HEK293 (cell line): ENCODE measurements at regions of chr12 and their contacts with region 1.

Region 1: GRCh38 chr12:106955377-106956047 is at the start of gene TMEM263:
- H3K4me3 ChIP-seq: peak within 1 kb of the TSS; percentile 59
- H3K27ac ChIP-seq: peak within 1 kb of the TSS; percentile 96
- H3K4me1 ChIP-seq: peaks cover 15% of the 10 kb centered on the region
- CTCF ChIP-seq: no peak

Region 2: GRCh38 chr12:106357549-106358395 is 597.7 kb before region 1 on chr12 and contains the start of gene POLR3B:
- CTCF ChIA-PET with region 1: no interaction called
- POLR2A ChIA-PET with region 1: interaction called, 10 read pairs
- H3K4me3 ChIP-seq: peak within 1 kb of the TSS; percentile 98
- H3K27ac ChIP-seq: peak within 1 kb of the TSS; percentile 74
- H3K4me1 ChIP-seq: no peaks in the 10 kb centered on the region
- CTCF ChIP-seq: peak; percentile 96

Region 3: GRCh38 chr12:106978035-106978800 is 22.7 kb after region 1 on chr12:
- CTCF ChIA-PET with region 1: no interaction called
- POLR2A ChIA-PET with region 1: interaction called, 23 read pairs
- H3K4me3 ChIP-seq: no peak overlapping the region
- H3K27ac ChIP-seq: no peak overlapping the region
- H3K4me1 ChIP-seq: peaks cover 7% of the 10 kb centered on the region; the same call in 1 of the 2 replicates
- CTCF ChIP-seq: no peak

Region 4: GRCh38 chr12:106986625-106987430 is 31.3 kb after region 1 on chr12 and contains the start of gene MTERF2:
- CTCF ChIA-PET with region 1: no interaction called
- POLR2A ChIA-PET with region 1: interaction called, 34 read pairs
- H3K4me3 ChIP-seq: peak within 1 kb of the TSS; percentile 89
- H3K27ac ChIP-seq: peak within 1 kb of the TSS; percentile 61
- H3K4me1 ChIP-seq: no peaks in the 10 kb centered on the region
- CTCF ChIP-seq: no peak; the same call in 1 of the 2 replicates

Region 5: DNA sequence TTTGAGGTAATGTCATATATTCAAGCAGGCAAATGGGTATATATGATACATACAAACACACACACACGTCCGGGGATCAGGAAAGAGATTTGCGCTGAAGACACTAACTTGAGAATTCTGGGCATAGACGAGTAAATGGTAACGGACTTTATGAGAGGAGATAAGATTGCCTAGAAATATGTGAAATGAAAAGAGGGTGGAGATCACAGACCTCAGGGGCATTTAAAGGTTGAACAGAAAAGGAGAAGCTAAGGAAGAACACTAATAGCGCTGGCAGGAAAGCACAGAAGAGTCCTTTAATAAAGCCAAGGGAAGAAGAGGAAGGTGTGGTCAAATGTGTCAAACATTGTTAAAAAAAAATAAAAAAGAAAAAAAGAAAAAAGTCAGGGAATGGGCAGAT is 124.8 kb after region 1 on chr12:
- CTCF ChIA-PET with region 1: no interaction called
- POLR2A ChIA-PET with region 1: no interaction called
- H3K4me3 ChIP-seq: no peak overlapping the region
- H3K27ac ChIP-seq: no peak overlapping the region
- H3K4me1 ChIP-seq: no peaks in the 10 kb centered on the region
- CTCF ChIP-seq: no peak

Region 6: GRCh38 chr12:107093417-107094182 is 138.1 kb after region 1 on chr12 and contains the start of gene CRY1:
- CTCF ChIA-PET with region 1: no interaction called
- POLR2A ChIA-PET with region 1: interaction called, 22 read pairs
- H3K4me3 ChIP-seq: peak within 1 kb of the TSS; percentile 89
- H3K27ac ChIP-seq: peak within 1 kb of the TSS; percentile 44; the same call in 1 of the 2 replicates
- H3K4me1 ChIP-seq: peaks cover 6% of the 10 kb centered on the region; the same call in 1 of the 2 replicates
- CTCF ChIP-seq: 0 out of 2 replicates have a peak, but pooled peaks have one; percentile 14